ENCODE measurements at regions of chr5 and their contacts with region 1.

Region 1: GRCh38 chr5:181243512-181244343 is at the start of gene RACK1:
- DNase-seq: peak; percentile 73 to 89
- H3K4me3 ChIP-seq: peak within 1 kb of the TSS; percentile 95
- H3K27ac ChIP-seq: peak within 1 kb of the TSS; percentile 97
- H3K4me1 ChIP-seq: peaks cover 29% of the 10 kb centered on the region
- H3K27me3 ChIP-seq: no peaks in the 10 kb centered on the region
- CTCF ChIP-seq: no peak
- total RNA-seq, gene RACK1: 2,373 and 2,766 TPM in 2 replicates

Region 2: GRCh38 chr5:180810210-180810958 is 433.3 kb before region 1 on chr5:
- CTCF ChIA-PET with region 1: no interaction called
- POLR2A ChIA-PET with region 1: no interaction called
- intact Hi-C with region 1: loop called (anchors 2 kb)
- DNase-seq: peak; percentile 80 to 96
- H3K4me3 ChIP-seq: peak overlapping the region; percentile 95
- H3K27ac ChIP-seq: peak overlapping the region; percentile 91
- H3K4me1 ChIP-seq: peaks cover 55% of the 10 kb centered on the region
- H3K27me3 ChIP-seq: no peaks in the 10 kb centered on the region
- CTCF ChIP-seq: no peak

Region 3: DNA sequence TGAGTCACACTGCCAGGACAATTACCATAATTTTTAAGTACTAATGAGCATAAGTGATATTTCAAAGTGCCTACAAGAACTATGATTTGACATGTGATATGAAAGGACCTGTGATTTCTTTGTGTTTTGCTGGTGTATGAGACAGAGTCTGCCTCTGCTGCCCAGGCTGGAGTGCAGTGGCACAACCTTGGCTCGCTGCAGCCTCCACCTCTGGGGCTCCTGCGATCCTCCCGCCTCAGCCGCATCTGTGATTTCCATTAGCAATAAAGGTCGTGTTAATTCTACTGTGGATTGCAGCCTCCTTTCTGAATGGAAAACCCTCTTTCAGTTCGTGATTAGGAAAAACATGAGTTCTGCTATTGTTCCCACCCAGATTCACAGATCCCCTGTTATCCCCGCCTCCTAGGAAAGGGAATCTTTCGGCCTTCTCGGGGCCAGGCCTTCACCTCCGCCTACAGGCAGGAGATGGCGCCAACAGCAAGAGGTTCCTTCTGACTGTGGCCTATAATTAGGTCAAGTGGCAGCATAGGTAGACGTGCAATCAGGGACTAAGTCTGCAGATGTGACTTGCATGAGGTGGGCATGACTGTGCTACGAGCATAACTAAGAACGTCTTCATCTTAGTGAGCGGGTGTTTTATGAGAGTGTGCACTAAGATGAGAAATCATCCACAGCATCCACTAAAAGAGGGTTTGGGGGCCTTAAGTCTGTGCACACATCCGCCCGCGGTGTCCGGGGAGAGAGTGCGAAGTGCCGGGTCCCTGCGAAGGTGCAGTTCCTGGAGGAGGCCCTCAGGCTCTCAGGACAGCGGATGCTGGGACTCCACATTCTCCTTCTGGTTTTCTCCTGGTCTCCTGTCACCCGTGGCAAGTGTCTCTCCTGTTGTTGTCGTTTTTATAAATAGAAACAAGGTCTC is 61.8 kb before region 1 on chr5:
- CTCF ChIA-PET with region 1: interaction called, 3 read pairs
- POLR2A ChIA-PET with region 1: interaction called, 19 read pairs
- intact Hi-C with region 1: loop called (anchors 1 kb)
- DNase-seq: peak; percentile 76 to 78
- H3K4me3 ChIP-seq: no peak overlapping the region
- H3K27ac ChIP-seq: no peak overlapping the region
- H3K4me1 ChIP-seq: peaks cover 18% of the 10 kb centered on the region; the same call in 1 of the 2 replicates
- H3K27me3 ChIP-seq: no peaks in the 10 kb centered on the region
- CTCF ChIP-seq: peak; percentile 76

Region 4: GRCh38 chr5:181223058-181223728 is 20.5 kb before region 1 on chr5 and contains the start of gene TRIM41:
- CTCF ChIA-PET with region 1: interaction called, 3 read pairs
- POLR2A ChIA-PET with region 1: interaction called, 18 read pairs
- intact Hi-C with region 1: loop called (anchors 1 kb)
- DNase-seq: peak; percentile 93 to 99
- H3K4me3 ChIP-seq: peak within 1 kb of the TSS; percentile 68
- H3K27ac ChIP-seq: peak within 1 kb of the TSS; percentile 89
- H3K4me1 ChIP-seq: peaks cover 15% of the 10 kb centered on the region; the same call in 1 of the 2 replicates
- H3K27me3 ChIP-seq: no peaks in the 10 kb centered on the region
- CTCF ChIP-seq: no peak
- total RNA-seq, gene TRIM41: 57.6 and 66.0 TPM in 2 replicates

Region 5: DNA sequence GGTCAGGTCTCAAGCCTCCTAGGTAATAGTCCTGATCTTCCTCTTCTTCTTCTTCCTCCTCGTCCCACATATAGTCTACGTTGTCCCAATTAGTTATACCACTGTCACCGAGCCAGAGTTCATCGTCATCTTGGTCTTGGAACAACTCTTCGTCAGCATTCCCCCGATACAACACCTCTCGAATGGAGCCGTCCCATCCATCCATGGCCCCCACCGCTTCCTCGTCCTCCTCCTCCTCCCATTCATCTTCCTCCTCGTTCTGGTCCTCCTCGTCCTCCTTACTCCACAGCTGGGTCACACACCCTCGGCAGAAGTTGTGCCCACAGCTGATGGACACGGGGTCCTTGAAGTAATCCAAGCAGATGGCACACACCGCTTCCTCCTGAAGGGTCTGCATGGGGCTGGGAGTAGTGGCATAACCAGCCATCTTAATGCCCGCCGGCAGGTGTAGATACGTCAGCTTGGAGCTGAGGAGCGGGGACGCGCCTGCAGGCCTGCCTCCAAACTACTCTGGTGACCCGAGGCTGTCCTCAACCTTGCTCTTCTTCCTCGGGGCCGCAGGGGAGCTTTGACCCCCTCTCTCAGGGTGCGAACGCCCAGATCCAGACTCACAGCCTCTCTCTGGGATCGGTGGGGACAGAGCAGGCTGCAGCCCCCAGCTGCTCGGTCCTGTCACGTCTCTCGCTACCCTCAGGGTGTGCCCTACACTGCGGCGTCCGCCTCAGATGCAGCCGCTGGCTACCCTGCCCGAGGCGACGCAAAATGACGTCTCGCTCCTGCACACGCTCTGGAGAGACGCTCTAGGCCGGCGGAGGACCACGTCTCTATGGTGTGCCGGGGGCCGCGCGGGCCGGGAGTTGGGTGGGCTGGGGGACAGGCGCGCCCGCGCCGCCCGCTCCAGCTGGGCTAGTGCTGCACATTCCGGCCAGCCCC is 16.9 kb after region 1 on chr5 and contains the start of gene TRIM52:
- CTCF ChIA-PET with region 1: interaction called, 13 read pairs
- POLR2A ChIA-PET with region 1: interaction called, 6 read pairs
- intact Hi-C with region 1: loop called (anchors 2 kb)
- DNase-seq: peak; percentile 83 to 91
- H3K4me3 ChIP-seq: peak within 1 kb of the TSS; percentile 96
- H3K27ac ChIP-seq: peak within 1 kb of the TSS; percentile 66
- H3K4me1 ChIP-seq: peaks cover 36% of the 10 kb centered on the region
- H3K27me3 ChIP-seq: no peaks in the 10 kb centered on the region
- CTCF ChIP-seq: no peak
- total RNA-seq, gene TRIM52: 15.2 and 15.7 TPM in 2 replicates

Measured in PC-9 (cell line).